ENCODE measurements at regions of chr5 and their contacts with region 1.

Region 1: DNA sequence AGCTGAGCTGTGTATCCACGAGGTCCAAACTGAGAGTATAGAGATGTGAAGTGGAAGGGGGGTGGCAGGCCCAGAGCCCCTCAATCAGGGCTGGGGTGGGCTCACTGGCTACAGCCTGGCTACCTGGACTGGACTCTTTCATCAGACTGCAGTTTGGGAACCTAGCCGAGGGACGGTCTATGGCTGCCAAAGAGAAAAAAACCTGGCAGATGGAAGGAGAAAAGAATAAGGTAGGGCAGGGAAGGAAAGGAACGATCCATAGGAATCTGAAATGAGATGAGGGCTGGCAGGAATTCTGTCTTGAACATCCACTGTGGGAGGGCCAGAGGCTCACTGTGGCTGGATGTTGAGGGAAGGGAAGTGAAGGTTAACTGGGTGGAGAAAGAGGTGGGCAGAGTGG is 224.4 kb upstream of the PANK3 start:
- DNase-seq: no peak
- ATAC-seq: no peak
- H3K4me3 Mint-ChIP-seq: no peak overlapping the region
- H3K27ac Mint-ChIP-seq: no peak overlapping the region
- H3K4me1 Mint-ChIP-seq: 0 out of 2 replicates have a peak, but pooled peaks cover 2% of the 10 kb centered on the region
- H3K27me3 Mint-ChIP-seq: no peaks in the 10 kb centered on the region; the same call in 1 of the 2 replicates
- CTCF ChIP-seq: no peak

Region 2: DNA sequence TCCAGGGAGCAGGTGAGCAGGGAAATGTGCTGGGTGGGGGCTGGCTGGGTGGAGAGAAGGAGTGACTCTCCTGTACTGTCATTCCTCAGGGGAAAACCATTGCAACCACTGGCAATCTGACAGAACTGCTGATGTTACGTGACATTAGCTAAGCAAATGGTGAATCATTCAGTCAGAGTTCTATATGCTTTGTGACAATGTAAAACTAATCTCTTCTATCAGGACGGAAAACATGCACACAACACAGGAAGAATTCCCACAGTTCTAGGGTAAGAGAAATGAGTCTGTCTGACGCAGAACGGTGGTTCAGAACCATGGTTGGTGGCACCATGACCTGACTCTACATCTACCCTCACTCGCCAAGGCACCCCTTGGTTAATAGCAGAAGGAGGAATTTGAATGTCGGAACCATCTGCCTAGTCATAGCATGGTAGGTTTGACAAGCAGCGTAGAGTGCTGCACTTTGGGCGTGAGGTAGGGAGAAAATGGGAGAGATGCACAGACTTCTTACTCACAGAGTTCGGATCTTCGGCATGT is 19.3 kb after region 1 on chr5:
- CTCF ChIA-PET with region 1: no interaction called
- POLR2A ChIA-PET with region 1: no interaction called
- DNase-seq: no peak
- ATAC-seq: no peak
- H3K4me3 Mint-ChIP-seq: no peak overlapping the region
- H3K27ac Mint-ChIP-seq: no peak overlapping the region
- H3K4me1 Mint-ChIP-seq: peaks cover 14% of the 10 kb centered on the region
- H3K27me3 Mint-ChIP-seq: peaks cover 25% of the 10 kb centered on the region
- CTCF ChIP-seq: no peak

Region 3: DNA sequence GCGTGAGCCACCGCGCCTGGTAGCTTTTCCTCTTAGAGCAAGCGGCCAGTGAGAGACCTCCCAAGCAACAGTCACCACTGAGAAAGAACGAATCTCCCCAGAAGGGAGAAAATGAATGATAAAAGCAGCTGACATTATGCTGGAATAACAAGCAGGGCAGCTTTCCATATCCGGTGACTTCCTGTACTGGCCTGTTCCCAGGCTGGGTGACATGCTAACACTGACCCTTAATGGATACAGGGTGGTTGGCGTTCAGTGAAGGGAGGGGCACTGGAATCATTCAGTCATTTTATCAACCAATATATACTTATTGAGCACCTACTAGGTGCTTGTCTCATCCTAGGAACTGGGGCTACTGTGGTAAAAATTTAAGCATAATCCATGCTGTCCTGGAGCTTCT is 133.0 kb after region 1 on chr5:
- CTCF ChIA-PET with region 1: no interaction called
- POLR2A ChIA-PET with region 1: interaction called, 10 read pairs
- DNase-seq: no peak
- ATAC-seq: no peak
- H3K4me3 Mint-ChIP-seq: no peak overlapping the region
- H3K27ac Mint-ChIP-seq: no peak overlapping the region
- H3K4me1 Mint-ChIP-seq: peaks cover 21% of the 10 kb centered on the region
- H3K27me3 Mint-ChIP-seq: no peaks in the 10 kb centered on the region
- CTCF ChIP-seq: no peak